Activated T-helper 2 cell treated with anti-CD3 and anti-CD28 coated beads, Interferon-gamma antibody, Interleukin-2, Interleukin-4, amounts not matched to agents 10 μg/mL and 5 μg/mL and 100 μg/mL, durations not matched to agents 14 hours and 24 hours and 36 hours (primary cell): ENCODE measurements at regions of chr19 and their contacts with region 1.

Region 1: GRCh38 chr19:33771384-33772101 is 25.1 kb upstream of the KCTD15 start:
- DNase-seq: peak; percentile 53
- H3K4me3 Mint-ChIP-seq: no peak overlapping the region
- H3K27ac Mint-ChIP-seq: no peak overlapping the region
- H3K4me1 Mint-ChIP-seq: no peaks in the 10 kb centered on the region
- H3K27me3 Mint-ChIP-seq: no peaks in the 10 kb centered on the region

Region 2: DNA sequence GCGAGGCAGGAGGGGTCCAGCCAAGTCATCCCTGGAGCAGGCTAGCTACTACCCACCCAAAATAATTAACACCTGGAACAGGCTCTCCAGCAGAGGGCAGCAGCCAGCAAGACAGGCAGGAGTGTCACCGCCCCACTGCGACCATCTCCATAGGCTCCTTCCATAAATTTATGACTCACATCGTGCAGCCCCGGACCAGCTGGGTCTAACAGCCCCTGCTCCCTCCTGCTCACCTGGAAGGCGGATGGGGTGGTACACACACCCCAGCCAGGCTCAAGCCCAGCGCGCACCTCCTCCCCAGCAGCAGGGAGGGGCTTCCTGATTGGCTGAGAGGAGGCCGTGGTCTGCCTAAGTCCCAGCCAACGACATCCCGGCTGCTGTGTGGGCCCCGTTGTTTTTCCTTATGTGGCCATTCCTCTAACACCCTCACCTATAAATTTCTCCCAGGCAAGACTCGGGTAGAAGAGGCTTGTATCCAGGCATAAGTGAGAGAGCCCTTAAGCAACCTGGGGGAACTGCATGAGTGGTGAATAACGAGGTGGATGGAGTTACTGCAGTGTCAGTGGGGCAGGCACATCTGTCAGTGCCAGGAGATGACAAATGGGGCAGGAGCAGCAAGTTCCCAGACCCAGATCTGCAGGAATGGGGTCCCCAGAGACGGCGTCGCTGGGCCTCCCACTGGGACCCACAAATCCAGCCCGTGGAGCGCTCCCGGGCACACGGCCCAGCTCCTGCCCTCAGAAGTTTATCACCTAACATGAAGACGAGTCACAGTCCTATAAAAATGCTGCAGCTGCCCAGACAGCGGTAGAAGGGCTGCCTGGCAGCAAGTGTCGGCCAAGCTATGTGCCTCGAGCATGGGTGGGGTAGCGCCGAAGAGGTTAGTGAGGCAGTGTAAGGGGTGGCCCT is 355.0 kb before region 1 on chr19:
- intact Hi-C with region 1: loop called (anchors 5 kb)
- DNase-seq: peak; percentile 43
- H3K4me3 Mint-ChIP-seq: peak overlapping the region; percentile 43
- H3K27ac Mint-ChIP-seq: no peak overlapping the region
- H3K4me1 Mint-ChIP-seq: no peaks in the 10 kb centered on the region
- H3K27me3 Mint-ChIP-seq: no peaks in the 10 kb centered on the region

Region 3: DNA sequence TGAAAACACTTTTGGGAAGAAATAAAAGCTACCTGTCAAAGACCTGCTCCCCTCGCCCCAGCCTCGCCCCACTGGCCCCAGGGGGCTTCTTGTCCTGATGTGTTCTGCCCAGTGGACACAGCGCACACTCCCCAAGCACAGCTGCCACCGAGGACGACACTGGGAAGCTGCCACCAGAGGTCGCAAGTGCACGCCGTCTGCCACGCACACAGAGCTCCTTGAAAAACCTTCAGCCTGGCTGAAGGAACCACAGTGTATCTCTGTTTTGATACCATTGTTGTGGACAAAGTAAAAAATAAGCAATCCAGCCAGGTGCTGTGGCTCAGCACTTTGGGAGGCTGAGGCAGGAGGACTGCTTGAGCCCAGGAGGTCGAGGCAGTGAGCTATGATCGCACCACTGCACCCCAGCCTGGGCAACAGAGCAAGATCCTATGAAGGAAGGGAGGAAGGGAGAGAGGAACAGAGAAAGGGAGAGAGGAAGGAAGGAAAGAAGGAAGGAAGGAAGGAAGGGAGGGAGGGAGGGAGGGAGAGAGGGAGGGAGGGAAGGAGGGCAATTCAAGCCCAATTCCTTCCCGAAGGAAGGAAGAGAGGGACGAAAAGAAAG is 340.8 kb before region 1 on chr19:
- intact Hi-C with region 1: loop called (anchors 1 kb)
- DNase-seq: peak; percentile 40
- H3K4me3 Mint-ChIP-seq: no peak overlapping the region
- H3K27ac Mint-ChIP-seq: no peak overlapping the region
- H3K4me1 Mint-ChIP-seq: peaks cover 2% of the 10 kb centered on the region
- H3K27me3 Mint-ChIP-seq: no peaks in the 10 kb centered on the region

Region 4: DNA sequence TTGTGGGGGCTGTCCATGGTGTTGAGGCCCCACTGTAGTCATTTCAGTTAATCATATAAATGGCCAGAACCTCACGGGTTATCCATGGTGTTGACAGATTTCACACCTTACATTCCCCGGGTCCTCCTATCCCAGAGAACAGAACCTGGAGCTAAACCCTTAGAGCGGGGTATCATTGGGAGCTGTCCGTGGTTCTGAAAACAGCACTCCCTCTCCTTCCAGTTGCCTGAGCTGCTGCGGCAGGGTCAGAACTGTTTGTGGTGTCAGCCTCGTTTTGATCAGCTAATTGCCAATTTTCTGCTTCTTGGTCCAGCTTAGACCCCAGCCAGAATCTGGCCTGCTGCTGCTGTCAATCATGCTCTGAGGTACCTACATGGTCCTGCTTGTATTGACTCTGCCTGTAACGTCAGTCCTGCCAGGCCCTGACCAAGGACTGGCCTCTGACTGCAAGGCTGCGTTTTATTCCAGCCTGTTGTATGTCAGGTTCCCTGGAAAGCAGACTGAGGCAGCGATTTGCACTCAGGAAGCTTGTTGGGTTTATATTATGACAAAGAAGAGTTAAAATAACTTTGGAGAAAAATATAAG is 30.6 kb before region 1 on chr19:
- intact Hi-C with region 1: no loop called
- DNase-seq: no peak
- H3K4me3 Mint-ChIP-seq: no peak overlapping the region
- H3K27ac Mint-ChIP-seq: no peak overlapping the region
- H3K4me1 Mint-ChIP-seq: no peaks in the 10 kb centered on the region
- H3K27me3 Mint-ChIP-seq: no peaks in the 10 kb centered on the region